Transverse colon (tissue), 4 donors: ENCODE measurements at regions of chr3 and their contacts with region 1.

Region 1: GRCh38 chr3:96863129-96863740 is 48.8 kb downstream of the EPHA6 start:
- DNase-seq: peak; percentile 9
- H3K4me3 ChIP-seq: no peak overlapping the region
- H3K27ac ChIP-seq: no peak overlapping the region
- H3K4me1 ChIP-seq: no peaks in the 10 kb centered on the region
- H3K27me3 ChIP-seq: no peaks in the 10 kb centered on the region
- CTCF ChIP-seq: peak; percentile 44 to 63 (median 54)
- EP300 ChIP-seq: no peak
- POLR2A ChIP-seq: no peak

Region 2: DNA sequence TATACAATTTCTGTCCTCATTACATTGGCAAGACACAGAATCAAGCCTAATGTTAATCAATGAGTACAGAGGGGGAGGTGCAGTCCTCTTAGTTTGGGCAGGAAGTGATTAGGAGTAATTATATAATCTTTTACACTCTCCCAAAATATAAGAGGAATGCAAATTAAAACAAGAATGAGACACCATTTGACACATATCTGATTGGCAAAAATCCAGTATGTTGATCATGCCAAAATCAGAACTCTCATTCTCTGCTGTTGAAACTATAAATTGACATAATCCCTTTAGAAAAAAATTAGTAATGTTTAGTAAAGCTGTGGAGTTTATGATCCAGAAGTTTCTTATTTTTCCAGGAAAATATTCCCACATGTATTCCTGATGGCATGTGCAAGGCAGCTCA is 324.5 kb after region 1 on chr3:
- in situ Hi-C with region 1: no loop called
- intact Hi-C with region 1: no loop called
- DNase-seq: no peak
- H3K4me3 ChIP-seq: no peak overlapping the region
- H3K27ac ChIP-seq: no peak overlapping the region
- H3K4me1 ChIP-seq: no peaks in the 10 kb centered on the region
- H3K27me3 ChIP-seq: no peaks in the 10 kb centered on the region
- CTCF ChIP-seq: no peak
- EP300 ChIP-seq: no peak
- POLR2A ChIP-seq: no peak

Region 3: DNA sequence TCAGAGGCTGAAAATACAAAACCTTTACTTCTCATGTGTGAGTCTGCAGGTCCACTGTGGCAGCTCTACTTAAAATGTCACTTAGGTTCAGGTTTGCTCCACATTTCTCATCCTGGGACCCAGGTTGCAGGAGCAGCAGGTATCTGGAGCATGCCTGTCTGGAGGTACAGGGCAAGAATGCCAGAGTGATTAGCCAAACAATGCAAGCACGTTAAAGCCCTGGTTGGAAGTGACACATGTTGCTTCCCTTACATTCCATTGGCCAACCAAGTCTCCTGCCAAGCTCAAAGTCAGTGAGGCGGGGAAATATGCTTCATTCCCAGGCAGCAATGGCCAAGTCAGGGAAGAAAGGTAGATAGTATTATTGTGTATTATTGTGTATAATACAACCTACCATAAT is 824.5 kb after region 1 on chr3:
- in situ Hi-C with region 1: loop called in 1 of 4 experiments (anchors 25 kb)
- intact Hi-C with region 1: no loop called
- DNase-seq: no peak
- H3K4me3 ChIP-seq: no peak overlapping the region
- H3K27ac ChIP-seq: no peak overlapping the region
- H3K4me1 ChIP-seq: no peaks in the 10 kb centered on the region
- H3K27me3 ChIP-seq: no peaks in the 10 kb centered on the region
- CTCF ChIP-seq: no peak
- EP300 ChIP-seq: no peak
- POLR2A ChIP-seq: no peak

Region 4: DNA sequence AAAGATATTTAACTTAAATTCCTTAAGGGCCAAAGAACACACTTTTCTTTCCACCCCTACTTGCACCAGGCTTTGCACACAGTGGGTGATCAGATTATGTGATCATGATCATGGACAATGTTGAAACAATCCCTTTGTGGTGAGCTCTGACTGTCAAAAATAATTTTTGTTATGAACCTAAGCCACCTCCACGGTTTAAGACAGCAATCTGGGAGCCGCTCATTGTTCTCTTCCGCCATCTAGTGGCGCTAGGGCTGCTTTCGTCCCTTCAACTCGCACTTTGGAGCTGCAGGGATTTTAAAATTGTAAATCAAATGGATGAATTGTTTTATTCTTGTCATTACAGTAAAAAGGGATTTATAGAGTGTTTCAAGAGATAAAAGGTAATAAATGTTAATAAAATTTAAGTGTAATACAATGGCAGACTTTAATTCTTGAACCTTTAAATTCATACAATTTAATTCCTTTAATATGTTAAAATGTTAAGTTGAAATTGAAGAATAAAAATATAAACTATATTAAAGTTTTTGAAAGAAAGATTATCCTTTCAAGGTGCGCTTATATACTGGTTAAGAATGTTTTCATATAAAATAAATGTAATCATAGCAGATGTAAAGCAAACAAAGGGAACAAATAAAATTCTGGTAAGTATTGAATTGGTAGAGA is 856.1 kb after region 1 on chr3:
- in situ Hi-C with region 1: loop called in 2 of 4 experiments (anchors 25 kb)
- intact Hi-C with region 1: no loop called
- DNase-seq: peak; percentile 63
- H3K4me3 ChIP-seq: no peak overlapping the region
- H3K27ac ChIP-seq: no peak overlapping the region
- H3K4me1 ChIP-seq: no peaks in the 10 kb centered on the region
- H3K27me3 ChIP-seq: no peaks in the 10 kb centered on the region
- CTCF ChIP-seq: peak; percentile 52 to 90 (median 79)
- EP300 ChIP-seq: no peak
- POLR2A ChIP-seq: no peak